ENCODE measurements at regions of chr5 and their contacts with region 1.

Region 1: DNA sequence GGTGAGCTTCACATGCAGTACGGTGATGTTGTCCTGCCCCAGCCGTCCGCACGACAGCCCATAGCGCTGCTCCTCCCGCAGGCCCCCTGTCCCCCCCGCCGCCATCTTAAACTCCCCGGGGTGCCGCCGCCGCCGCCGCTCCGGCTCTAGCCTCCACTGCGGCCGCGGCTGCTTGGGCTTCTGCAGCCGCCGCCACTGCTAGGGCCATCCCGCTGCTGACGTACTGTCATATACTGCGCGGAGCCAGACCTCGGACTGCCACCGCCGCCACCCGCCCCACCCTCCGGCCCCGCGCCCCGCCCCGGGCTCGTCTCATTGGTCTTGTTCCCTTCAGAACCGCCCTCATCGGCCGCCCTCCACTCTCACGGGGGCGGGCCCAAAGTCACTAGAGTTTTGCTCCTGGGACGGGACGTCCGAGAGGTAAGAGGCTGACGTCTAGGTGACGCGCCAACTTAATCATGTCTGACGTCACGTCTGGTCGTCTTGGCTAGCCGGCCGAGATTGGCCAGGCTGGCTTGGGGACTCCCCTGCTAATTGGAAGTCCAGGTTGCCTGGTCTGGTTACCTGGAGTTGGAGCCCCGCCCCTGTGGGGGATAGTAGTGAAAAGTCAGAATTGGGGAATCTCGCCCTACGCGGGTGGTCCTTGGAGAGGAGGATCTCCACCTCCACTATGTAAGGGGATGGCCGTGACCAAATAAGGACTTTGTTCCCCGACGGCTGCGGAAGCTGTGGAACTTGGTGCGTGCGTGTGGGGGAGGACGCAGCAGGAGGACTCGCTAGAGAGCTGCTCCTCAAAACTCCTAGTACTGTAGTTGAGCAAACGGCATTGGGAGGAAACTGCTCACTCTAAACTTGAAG is at the start of gene ELL2:
- DNase-seq: peak; percentile 94
- H3K4me3 Mint-ChIP-seq: peak within 1 kb of the TSS; percentile 92
- H3K27ac Mint-ChIP-seq: peak within 1 kb of the TSS; percentile 98
- H3K4me1 Mint-ChIP-seq: peaks cover 51% of the 10 kb centered on the region
- H3K27me3 Mint-ChIP-seq: no peaks in the 10 kb centered on the region
- total RNA-seq, gene ELL2: 124 and 135 TPM in 2 replicates

Region 2: DNA sequence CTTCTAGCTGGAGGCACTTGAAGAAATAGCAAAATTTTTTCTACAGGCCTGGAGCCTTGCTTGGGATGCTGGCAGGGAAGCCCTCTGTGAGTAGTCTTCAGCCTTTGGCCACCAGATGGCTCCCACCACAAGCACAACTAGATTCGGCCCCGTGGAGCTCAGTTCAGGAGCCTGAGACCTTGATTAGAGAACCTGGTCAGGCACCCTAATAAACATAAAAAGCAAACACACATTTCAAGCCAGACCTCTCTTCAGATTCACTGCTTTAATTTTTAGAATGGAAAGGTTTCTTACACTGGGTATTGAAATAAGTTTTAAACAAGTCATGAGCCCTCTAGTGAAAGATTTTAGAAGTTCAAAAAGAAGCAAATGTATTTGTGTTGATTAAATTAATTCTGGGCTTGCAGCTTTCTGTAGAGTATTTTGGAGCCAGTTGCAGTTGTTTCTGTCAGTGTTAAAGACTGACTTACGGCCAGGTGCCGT is 180.7 kb before region 1 on chr5:
- intact Hi-C with region 1: no loop called
- DNase-seq: peak; percentile 52
- H3K4me3 Mint-ChIP-seq: peak overlapping the region; percentile 41
- H3K27ac Mint-ChIP-seq: no peak overlapping the region
- H3K4me1 Mint-ChIP-seq: peaks cover 19% of the 10 kb centered on the region
- H3K27me3 Mint-ChIP-seq: peaks cover 7% of the 10 kb centered on the region

Region 3: DNA sequence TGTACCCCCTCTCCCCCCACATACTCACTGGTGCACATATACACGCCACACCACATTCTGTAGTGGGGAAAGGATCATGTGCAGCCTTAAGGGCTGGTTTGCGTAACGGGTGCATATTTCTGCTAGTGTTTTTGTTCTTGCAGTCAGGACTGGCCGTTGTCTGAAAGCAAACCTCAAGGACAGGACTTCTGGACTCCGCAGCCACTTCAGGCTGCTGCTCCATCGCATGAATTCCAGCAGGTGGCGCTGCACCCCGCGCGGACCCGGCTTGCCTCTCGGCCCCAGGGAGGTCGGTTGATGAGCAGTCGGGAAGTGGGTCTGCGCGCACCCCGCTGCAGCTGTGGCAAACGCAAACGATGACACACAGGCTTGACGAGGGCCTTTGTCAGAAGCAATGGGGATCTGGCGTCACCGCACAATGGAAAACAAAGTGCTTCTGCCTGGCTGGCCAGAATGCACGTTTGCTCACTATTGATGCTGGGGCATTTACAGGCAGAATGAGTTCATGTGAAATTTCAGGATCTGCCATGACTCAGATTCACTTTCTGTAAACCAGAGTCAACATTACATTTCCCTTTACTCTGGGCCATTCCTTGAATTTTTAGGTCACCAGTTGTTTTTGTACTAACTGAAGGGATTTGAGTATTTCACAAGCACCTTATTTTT is 103.1 kb before region 1 on chr5:
- intact Hi-C with region 1: loop called (anchors 1 kb)
- DNase-seq: peak; percentile 84
- H3K4me3 Mint-ChIP-seq: peak overlapping the region; percentile 38
- H3K27ac Mint-ChIP-seq: peak overlapping the region; percentile 80
- H3K4me1 Mint-ChIP-seq: peaks cover 52% of the 10 kb centered on the region
- H3K27me3 Mint-ChIP-seq: no peaks in the 10 kb centered on the region

Region 4: DNA sequence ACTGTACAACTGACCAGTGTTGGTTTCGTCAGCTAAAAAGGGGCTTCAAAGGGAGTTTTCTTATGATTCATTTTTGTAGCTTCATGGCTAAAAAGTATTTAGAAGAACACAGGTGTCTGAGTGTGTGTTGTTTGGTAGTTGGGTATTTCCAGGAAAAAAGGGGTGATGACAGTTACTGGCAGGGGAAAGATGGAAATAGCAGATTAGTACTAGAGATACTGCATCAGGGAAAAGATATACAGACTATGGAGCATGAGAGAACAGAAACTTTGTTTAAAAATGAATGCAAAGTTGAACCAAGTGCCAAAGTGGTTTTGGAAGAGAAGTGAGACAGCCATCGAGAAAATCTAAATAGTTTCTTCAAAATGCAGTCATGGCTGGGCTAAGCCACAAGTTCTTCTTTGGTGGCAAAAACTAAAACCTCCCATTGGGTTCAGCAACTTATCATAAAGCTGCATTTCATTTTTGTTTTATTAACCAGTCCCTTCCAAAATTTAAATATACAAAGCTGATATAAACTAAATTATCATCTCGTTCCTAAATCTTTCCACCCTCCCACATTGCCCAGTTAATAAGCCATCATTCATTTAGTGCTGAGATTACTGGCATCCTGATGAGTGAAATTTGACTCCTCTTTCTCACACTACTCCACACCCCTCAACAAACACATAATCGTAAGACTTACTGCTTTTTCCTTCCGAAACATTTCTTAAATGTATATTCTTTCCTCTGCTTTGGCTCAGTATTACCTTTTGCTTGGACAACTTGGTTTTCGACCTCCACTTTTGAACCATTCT is 33.7 kb before region 1 on chr5:
- intact Hi-C with region 1: loop called (anchors 2 kb)
- DNase-seq: no peak
- H3K4me3 Mint-ChIP-seq: peak overlapping the region; percentile 5
- H3K27ac Mint-ChIP-seq: peak overlapping the region; percentile 85
- H3K4me1 Mint-ChIP-seq: peaks cover 64% of the 10 kb centered on the region
- H3K27me3 Mint-ChIP-seq: no peaks in the 10 kb centered on the region

Region 5: GRCh38 chr5:96079075-96079474 is 117.2 kb after region 1 on chr5:
- intact Hi-C with region 1: loop called (anchors 2 kb)
- DNase-seq: no peak
- H3K4me3 Mint-ChIP-seq: no peak overlapping the region
- H3K27ac Mint-ChIP-seq: peak overlapping the region; percentile 76
- H3K4me1 Mint-ChIP-seq: peaks cover 64% of the 10 kb centered on the region
- H3K27me3 Mint-ChIP-seq: no peaks in the 10 kb centered on the region

Region 6: DNA sequence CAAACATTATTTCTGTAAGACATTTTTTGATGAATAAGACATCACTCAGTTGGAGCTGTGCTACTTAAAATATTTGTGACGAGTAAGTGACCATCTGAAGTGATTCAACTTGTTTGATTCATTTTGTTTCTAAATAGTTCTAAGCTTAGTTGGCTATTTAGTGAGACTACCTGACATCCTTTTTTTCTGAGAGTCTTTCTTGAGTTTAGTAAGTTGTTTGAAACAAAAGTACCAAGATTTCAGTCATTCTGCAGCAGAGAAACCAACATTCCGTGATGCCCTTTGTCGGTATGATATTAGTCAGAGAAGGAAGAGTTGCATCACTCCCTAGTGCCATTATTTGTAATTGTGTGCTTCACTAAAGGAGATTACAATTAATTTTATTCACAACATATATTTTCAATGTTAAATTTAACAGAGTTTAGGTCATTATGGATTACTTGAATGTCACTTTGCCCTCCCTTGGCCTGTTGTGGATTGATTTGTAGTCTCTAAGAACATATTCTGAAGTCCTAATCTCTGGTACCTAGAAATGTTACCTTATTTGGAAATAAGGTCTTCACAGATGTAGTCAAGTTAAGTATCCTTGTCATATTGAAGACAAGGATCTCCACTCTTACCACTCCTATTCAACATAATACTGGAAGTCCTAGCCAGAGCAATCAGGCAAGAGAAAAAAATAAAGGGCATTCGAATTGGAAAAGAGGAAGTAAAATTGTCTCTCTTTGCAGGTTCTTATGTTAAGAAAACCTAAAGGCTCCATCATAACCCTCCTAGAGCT is 259.0 kb after region 1 on chr5:
- intact Hi-C with region 1: loop called (anchors 1 kb)
- DNase-seq: no peak
- H3K4me3 Mint-ChIP-seq: no peak overlapping the region
- H3K27ac Mint-ChIP-seq: peak overlapping the region; percentile 64
- H3K4me1 Mint-ChIP-seq: peaks cover 15% of the 10 kb centered on the region
- H3K27me3 Mint-ChIP-seq: no peaks in the 10 kb centered on the region

Region 7: DNA sequence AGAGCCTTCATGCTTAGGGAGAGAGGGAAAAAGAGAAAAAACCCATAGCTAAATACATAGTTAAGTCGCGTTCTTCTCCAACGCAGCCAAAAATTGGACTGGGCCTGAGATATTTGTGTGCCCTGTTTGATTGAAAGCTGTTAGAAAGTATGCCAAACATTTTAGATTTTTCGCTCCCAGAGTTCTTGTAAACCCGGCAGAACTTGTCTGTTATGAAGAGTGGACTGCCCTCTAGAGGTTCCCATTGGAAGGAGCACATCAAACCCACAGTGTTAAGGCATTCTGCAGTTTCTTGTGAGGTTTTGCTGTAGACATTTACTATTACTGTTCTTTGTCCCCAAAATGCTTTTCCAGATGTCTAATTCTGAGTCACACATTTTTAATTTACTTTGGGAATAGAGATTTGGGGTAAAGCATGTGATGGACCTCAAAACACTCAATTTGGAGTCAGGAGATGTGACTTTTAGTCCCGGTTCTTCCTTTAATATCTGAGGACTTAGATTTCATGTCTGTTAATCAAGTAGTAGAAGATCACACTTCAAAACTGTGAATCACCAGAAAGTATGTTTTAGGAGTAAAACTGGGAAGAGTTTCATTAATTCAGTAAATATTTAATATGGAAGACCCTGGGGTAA is 374.6 kb after region 1 on chr5:
- intact Hi-C with region 1: loop called (anchors 1 kb)
- DNase-seq: peak; percentile 38
- H3K4me3 Mint-ChIP-seq: no peak overlapping the region
- H3K27ac Mint-ChIP-seq: no peak overlapping the region
- H3K4me1 Mint-ChIP-seq: peaks cover 14% of the 10 kb centered on the region
- H3K27me3 Mint-ChIP-seq: peaks cover 21% of the 10 kb centered on the region